ENCODE measurements at regions of chr2 and their contacts with region 1.

Region 1: DNA sequence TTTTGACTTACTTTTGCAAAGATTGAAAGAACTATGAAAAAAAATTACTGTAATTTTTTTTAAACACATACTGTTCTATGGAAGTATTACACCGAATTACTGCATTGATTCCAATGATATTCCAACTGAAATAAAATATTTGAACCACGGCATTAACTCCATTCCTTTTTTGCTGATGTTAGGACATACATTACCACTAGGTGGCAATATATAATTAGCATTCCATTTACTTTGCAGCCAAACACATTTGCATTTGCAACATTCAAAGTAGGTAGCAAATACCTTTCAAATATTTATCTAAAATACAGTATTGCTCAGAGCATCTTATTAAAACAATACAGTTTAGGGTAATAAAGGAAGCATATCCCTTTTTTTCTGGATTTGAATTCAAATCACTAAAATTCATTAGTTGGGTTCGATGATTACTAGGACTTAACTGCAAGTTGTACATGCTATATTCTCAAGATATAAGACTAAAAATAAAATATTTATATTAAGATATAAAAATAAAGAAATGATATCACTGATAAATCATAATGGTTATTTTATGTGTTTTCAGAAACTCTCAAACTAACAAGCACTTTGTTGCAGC is 31.3 kb downstream of the LANCL1 start:
- DNase-seq: no peak
- H3K4me3 Mint-ChIP-seq: no peak overlapping the region
- H3K27ac Mint-ChIP-seq: no peak overlapping the region
- H3K4me1 Mint-ChIP-seq: peaks cover 9% of the 10 kb centered on the region
- H3K27me3 Mint-ChIP-seq: no peaks in the 10 kb centered on the region

Region 2: DNA sequence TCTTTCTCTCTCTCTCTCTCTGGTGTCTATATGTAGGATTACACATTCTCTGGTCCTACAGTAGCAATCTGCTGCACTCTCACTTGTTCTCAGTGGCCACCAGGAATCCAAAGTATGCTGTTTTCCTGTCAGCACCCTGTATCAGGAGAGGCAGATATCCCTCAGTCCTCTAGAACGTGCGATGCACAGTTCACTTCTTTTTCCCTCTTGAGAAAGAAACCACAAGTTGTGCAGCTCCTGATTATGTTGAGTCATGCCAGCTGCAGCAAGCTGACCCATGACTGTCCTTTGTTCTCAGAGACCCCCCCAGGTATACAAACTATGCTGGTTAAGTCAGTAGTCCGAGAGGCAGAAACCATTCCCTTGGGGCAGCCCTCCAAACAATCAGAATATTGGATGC is 23.3 kb before region 1 on chr2:
- intact Hi-C with region 1: no loop called
- DNase-seq: no peak
- H3K4me3 Mint-ChIP-seq: no peak overlapping the region
- H3K27ac Mint-ChIP-seq: no peak overlapping the region
- H3K4me1 Mint-ChIP-seq: no peaks in the 10 kb centered on the region
- H3K27me3 Mint-ChIP-seq: peaks cover 14% of the 10 kb centered on the region

Region 3: DNA sequence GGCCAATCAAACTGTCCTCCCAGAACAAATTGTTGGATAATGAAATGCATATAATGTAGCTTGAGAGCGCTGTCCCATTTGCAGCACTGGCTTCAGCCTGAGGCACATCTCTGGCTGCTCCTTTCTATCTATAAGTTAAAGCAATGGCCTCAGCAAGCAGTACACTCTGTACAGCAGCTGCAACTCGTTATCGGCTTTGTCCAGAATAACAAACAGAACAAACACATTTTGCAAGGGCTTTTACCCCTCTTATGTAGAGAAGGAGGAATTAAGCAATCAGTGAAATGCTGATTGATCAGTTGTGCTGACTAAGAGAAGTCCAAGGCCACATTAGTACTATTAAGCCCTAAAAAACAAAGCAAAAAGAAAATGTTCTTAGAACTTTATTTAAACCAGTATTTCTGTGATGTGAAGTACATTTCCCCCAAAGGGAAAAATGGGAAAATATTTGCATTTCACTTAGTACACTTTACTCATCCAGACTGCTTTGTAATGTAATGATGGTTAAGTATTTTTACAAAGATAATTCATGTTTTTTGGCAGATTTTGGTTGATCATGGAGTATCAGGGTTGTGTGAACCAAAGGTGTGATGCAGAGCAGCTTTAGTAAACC is 96.2 kb after region 1 on chr2:
- intact Hi-C with region 1: no loop called
- DNase-seq: no peak
- H3K4me3 Mint-ChIP-seq: no peak overlapping the region
- H3K27ac Mint-ChIP-seq: no peak overlapping the region
- H3K4me1 Mint-ChIP-seq: no peaks in the 10 kb centered on the region
- H3K27me3 Mint-ChIP-seq: peaks cover 3% of the 10 kb centered on the region

Region 4: DNA sequence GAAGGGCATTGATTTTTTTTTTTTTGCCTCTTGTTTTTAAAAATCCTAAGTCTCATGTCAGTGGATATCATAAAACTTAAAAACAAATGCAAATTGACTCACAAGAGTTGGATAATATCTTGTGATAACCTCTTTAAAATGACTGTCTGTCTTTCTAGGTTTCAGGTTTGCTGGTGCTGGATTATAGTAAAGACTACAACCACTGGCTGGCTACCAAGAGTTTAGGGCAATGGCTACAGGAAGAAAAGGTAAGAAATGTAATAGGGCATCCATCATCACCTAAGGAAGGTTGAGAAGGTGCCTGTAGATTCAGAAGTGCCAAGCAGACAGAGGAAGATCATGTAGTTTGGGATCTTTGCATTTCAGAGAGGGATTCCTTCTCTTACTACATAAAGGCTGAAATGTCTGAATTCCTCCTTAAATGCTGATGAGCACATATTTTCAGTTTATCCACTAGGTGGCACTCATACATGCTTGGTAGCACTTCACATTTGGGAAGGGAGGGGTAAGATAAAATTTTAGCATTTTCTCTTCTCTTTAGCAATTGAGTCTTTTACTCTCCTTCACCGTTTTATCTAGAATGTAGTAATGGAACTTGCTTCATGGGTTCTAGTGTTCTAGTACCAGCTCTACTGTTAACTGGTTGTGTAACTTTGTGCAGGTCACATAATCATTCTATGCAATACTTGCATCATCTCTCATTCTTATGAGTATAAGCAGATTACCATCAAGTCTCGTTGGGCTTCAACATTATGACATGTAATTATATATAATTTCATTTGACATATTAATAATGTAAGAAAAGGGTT is 132.3 kb after region 1 on chr2:
- intact Hi-C with region 1: loop called (anchors 10 kb)
- DNase-seq: no peak
- H3K4me3 Mint-ChIP-seq: no peak overlapping the region
- H3K27ac Mint-ChIP-seq: no peak overlapping the region
- H3K4me1 Mint-ChIP-seq: no peaks in the 10 kb centered on the region
- H3K27me3 Mint-ChIP-seq: peaks cover 2% of the 10 kb centered on the region

Region 5: DNA sequence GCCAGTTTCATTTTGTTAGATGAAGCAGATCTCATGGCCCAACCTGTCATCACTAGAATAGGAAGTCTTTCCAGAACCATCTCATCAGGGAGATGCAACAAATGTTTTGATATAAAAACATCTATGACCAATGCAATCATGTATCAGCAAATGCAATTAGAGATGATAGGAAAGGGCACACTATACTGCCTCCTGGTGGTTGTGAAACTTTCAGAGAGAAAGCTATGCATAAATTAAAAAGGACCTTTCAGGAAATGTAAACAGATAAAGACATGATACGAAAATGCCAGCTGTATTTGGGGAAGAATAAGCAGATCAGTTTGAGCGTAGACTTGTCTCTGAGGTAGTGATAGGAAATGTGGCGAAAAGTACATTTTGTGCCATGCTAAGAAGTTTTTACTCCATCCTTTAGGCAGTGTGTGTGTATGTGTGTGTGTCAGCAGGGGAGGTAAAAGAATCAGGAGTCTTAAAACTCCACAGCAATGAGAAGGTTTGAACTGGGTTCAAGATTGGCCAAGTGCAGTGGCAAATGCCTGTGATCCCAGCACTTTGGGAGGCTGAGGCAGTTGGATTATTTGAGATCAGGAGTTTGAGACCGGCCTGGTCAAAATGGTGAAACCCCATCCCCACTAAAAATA is 590.5 kb after region 1 on chr2:
- intact Hi-C with region 1: loop called (anchors 2 kb)
- DNase-seq: no peak
- H3K4me3 Mint-ChIP-seq: no peak overlapping the region
- H3K27ac Mint-ChIP-seq: no peak overlapping the region
- H3K4me1 Mint-ChIP-seq: no peaks in the 10 kb centered on the region
- H3K27me3 Mint-ChIP-seq: no peaks in the 10 kb centered on the region

Measured in activated T-helper 1 cell treated with anti-CD3 and anti-CD28 coated beads, Interleukin-12 subunit alpha, Interleukin-12 subunit beta, Interleukin-2, Interleukin-4 antibody, amounts not matched to agents 30 ng/mL and 10 ng/mL and 1 ng/mL, durations not matched to agents 14 hours and 24 hours and 36 hours (primary cell).